GM12878 (cell line): ENCODE measurements at regions of chr3 and their contacts with region 1.

Region 1: GRCh38 chr3:141360888-141361598 is 7.3 kb upstream of the ZBTB38 start:
- DNase-seq: no peak
- ATAC-seq: peak; percentile 87
- H3K4me3 ChIP-seq: peak overlapping the region; percentile 51; the same call in 1 of the 2 replicates
- H3K27ac ChIP-seq: peak overlapping the region; percentile 59
- H3K4me1 ChIP-seq: peaks cover 10% of the 10 kb centered on the region
- H3K27me3 ChIP-seq: no peaks in the 10 kb centered on the region
- CTCF ChIP-seq: peak; percentile 79 to 90 (median 82)
- EP300 ChIP-seq: no peak
- POLR2A ChIP-seq: no peak
- RAD21 ChIP-seq: peak; percentile 98

Region 2: GRCh38 chr3:141326123-141326522 is 34.9 kb before region 1 on chr3:
- CTCF ChIA-PET with region 1: interaction called, 11 read pairs
- POLR2A ChIA-PET with region 1: interaction called, 5 read pairs
- RAD21 ChIA-PET with region 1: interaction called, 4 read pairs
- SMC1A ChIA-PET with region 1: interaction called, 16 read pairs
- in situ Hi-C with region 1: no loop called
- intact Hi-C with region 1: no loop called
- DNase-seq: no peak
- ATAC-seq: no peak
- H3K4me3 ChIP-seq: no peak overlapping the region
- H3K27ac ChIP-seq: no peak overlapping the region
- H3K4me1 ChIP-seq: peaks cover 19% of the 10 kb centered on the region
- H3K27me3 ChIP-seq: no peaks in the 10 kb centered on the region
- CTCF ChIP-seq: no peak
- EP300 ChIP-seq: no peak
- POLR2A ChIP-seq: no peak
- RAD21 ChIP-seq: no peak

Region 3: DNA sequence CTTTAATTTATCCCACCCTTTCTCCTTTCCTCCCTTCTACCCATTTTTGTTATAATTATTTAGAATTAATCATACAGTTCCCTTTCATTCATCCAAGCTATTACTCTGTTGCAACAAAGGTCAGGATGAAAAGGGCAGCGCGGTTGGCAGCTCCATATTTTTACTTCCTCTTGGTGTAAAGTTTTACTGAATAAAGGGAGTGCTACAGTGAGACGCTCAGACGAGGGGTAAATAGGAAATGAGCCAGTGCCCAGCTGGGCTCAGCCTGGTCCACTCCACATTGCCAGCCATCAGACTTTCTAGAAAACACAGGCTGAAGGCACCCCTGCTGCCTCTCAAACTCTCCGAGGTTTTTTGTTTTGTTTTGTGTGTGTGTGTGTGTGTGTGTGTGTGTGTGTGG is 14.6 kb before region 1 on chr3:
- CTCF ChIA-PET with region 1: interaction called, 61 read pairs
- POLR2A ChIA-PET with region 1: no interaction called
- RAD21 ChIA-PET with region 1: interaction called, 20 read pairs
- SMC1A ChIA-PET with region 1: interaction called, 41 read pairs
- in situ Hi-C with region 1: no loop called
- intact Hi-C with region 1: no loop called
- DNase-seq: no peak
- ATAC-seq: peak; percentile 50
- H3K4me3 ChIP-seq: no peak overlapping the region
- H3K27ac ChIP-seq: no peak overlapping the region
- H3K4me1 ChIP-seq: peaks cover 12% of the 10 kb centered on the region; the same call in 1 of the 2 replicates
- H3K27me3 ChIP-seq: no peaks in the 10 kb centered on the region
- CTCF ChIP-seq: no peak
- EP300 ChIP-seq: no peak
- POLR2A ChIP-seq: no peak
- RAD21 ChIP-seq: no peak

Region 4: DNA sequence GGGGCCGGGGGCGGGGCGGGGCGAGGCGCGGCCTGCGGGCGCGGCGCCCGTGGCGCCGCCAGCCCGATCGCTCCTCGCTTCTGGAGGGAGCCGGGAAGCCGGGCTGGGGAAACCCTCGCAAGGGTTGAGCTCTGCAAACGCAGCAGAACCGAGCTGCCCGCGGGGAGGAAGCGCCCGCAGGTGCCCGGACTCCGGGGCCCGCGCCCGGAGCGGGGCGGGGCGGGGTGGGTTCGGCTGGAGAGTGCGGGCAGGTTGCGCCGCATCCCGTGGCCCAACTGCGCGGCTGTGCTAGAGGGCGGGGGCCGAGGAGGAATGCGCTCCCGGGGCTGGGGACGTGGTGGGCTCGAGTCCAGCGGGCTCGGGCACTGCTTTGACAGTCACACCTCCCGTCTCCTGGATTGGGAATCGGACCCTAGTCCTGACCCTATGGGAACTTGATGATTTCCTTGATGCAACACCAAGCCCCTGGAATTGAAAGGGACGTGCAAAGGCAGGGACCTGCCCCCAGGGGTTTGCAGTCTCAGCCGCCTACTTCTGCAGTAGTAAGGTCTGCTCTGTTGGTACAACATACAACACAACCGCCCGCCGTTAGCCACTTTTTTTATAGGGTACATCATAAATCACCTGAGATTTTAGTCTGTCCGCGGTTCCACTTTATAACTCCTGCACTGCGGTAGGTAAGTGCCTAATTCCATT is 41.6 kb after region 1 on chr3:
- CTCF ChIA-PET with region 1: interaction called, 107 read pairs
- POLR2A ChIA-PET with region 1: interaction called, 5 read pairs
- RAD21 ChIA-PET with region 1: interaction called, 31 read pairs
- SMC1A ChIA-PET with region 1: interaction called, 205 read pairs
- in situ Hi-C with region 1: no loop called
- intact Hi-C with region 1: no loop called
- DNase-seq: no peak
- ATAC-seq: peak; percentile 61
- H3K4me3 ChIP-seq: peak overlapping the region; percentile 72
- H3K27ac ChIP-seq: peak overlapping the region; percentile 92
- H3K4me1 ChIP-seq: peaks cover 29% of the 10 kb centered on the region
- H3K27me3 ChIP-seq: no peaks in the 10 kb centered on the region
- CTCF ChIP-seq: no peak
- EP300 ChIP-seq: no peak
- POLR2A ChIP-seq: peak; percentile 63
- RAD21 ChIP-seq: no peak

Region 5: DNA sequence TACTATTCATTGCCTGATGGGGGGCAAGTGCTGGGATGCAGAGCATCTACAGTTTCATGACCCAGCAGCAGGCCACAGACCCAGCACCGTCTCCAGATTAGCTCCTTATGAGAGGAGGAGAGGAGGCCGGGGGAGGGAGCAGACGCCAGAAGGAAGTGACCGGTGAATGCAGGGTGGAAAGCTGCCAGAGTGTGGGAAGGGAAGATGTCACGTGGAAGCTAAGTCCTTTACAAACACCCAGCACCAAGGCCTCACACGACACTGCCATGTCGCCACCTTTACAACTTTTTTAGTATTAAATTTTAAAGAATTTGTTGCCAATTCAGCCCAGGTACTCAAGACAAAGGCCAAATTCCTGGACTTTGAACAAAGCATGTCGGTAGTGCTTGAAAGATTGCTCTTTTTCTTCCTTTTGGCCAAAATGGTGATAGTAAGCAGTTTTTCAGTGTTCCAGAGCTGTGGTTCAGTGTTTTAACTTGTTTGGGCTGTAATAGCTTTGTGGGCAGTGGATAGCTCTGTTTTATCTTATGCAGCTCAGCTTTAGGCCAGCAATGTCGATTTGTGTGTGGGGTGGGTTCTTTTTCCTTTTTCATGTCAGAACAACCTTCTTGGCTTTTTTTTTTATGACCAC is 65.5 kb after region 1 on chr3:
- CTCF ChIA-PET with region 1: interaction called, 11 read pairs
- POLR2A ChIA-PET with region 1: no interaction called
- RAD21 ChIA-PET with region 1: interaction called, 10 read pairs
- SMC1A ChIA-PET with region 1: interaction called, 32 read pairs
- in situ Hi-C with region 1: no loop called
- intact Hi-C with region 1: no loop called
- DNase-seq: no peak
- ATAC-seq: no peak
- H3K4me3 ChIP-seq: no peak overlapping the region
- H3K27ac ChIP-seq: no peak overlapping the region
- H3K4me1 ChIP-seq: peaks cover 7% of the 10 kb centered on the region
- H3K27me3 ChIP-seq: no peaks in the 10 kb centered on the region
- CTCF ChIP-seq: no peak
- EP300 ChIP-seq: no peak
- POLR2A ChIP-seq: no peak
- RAD21 ChIP-seq: no peak

Region 6: DNA sequence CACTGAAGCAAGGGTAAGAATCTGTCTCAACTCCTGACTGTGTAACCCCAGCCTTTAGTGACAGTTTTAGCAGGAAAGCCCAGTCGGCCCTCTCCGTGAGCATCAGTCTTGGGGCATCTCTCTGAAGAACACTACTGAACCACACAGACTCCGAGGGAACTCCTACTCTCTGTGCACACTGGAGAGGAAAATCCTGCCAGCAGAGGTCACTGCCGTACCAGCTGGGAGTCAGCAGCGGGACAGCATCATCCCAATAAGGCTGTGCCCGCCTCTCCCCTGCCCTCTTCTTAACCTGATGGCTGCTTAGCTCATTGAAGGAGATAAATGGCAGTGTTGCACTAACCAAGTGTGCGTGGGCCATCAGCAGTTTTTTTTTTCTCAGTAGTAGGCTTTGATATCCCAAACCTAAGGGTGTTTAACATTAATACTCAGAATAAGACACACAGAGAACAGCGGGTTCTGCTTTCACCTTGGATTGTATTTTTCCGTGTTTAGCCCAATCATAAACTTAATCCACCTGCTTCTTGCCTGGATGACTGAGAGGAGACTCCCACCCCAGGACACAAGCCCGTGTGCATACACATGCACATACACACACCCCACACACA is 99.2 kb after region 1 on chr3:
- CTCF ChIA-PET with region 1: interaction called, 288 read pairs
- POLR2A ChIA-PET with region 1: no interaction called
- RAD21 ChIA-PET with region 1: interaction called, 148 read pairs
- SMC1A ChIA-PET with region 1: interaction called, 242 read pairs
- in situ Hi-C with region 1: no loop called
- intact Hi-C with region 1: no loop called
- DNase-seq: no peak
- ATAC-seq: peak; percentile 100
- H3K4me3 ChIP-seq: no peak overlapping the region
- H3K27ac ChIP-seq: no peak overlapping the region
- H3K4me1 ChIP-seq: peaks cover 3% of the 10 kb centered on the region; the same call in 1 of the 2 replicates
- H3K27me3 ChIP-seq: no peaks in the 10 kb centered on the region
- CTCF ChIP-seq: peak; percentile 79 to 96 (median 87)
- EP300 ChIP-seq: no peak
- POLR2A ChIP-seq: no peak
- RAD21 ChIP-seq: peak; percentile 89

Region 7: GRCh38 chr3:141729240-141729639 is 368.2 kb after region 1 on chr3:
- CTCF ChIA-PET with region 1: no interaction called
- POLR2A ChIA-PET with region 1: no interaction called
- RAD21 ChIA-PET with region 1: no interaction called
- SMC1A ChIA-PET with region 1: no interaction called
- in situ Hi-C with region 1: no loop called
- intact Hi-C with region 1: no loop called
- DNase-seq: no peak
- ATAC-seq: no peak
- H3K4me3 ChIP-seq: no peak overlapping the region
- H3K27ac ChIP-seq: no peak overlapping the region
- H3K4me1 ChIP-seq: no peaks in the 10 kb centered on the region
- H3K27me3 ChIP-seq: no peaks in the 10 kb centered on the region
- CTCF ChIP-seq: peak in 1 of 3 experiments; percentile 19; a peak in 1 of 6 replicates
- EP300 ChIP-seq: no peak
- POLR2A ChIP-seq: no peak
- RAD21 ChIP-seq: no peak